ENCODE measurements at regions of chr1 and their contacts with region 1.

Region 1: GRCh38 chr1:32291708-32292492 is at the start of gene HDAC1:
- DNase-seq: peak; percentile 99
- H3K4me3 ChIP-seq: peak within 1 kb of the TSS; percentile 91
- H3K27ac ChIP-seq: peak within 1 kb of the TSS; percentile 78
- H3K4me1 ChIP-seq: peaks cover 58% of the 10 kb centered on the region
- CTCF ChIP-seq: no peak
- total RNA-seq, gene HDAC1: 259 and 270 TPM in 2 replicates

Region 2: GRCh38 chr1:31789259-31790065 is 502.4 kb before region 1 on chr1:
- CTCF ChIA-PET with region 1: no interaction called
- POLR2A ChIA-PET with region 1: no interaction called
- intact Hi-C with region 1: no loop called
- DNase-seq: peak; percentile 91
- H3K4me3 ChIP-seq: peak overlapping the region; percentile 77
- H3K27ac ChIP-seq: peak overlapping the region; percentile 82
- H3K4me1 ChIP-seq: peaks cover 44% of the 10 kb centered on the region
- CTCF ChIP-seq: peak; percentile 90

Region 3: GRCh38 chr1:32215629-32216480 is 76.0 kb before region 1 on chr1:
- CTCF ChIA-PET with region 1: interaction called, 9 read pairs
- POLR2A ChIA-PET with region 1: interaction called, 7 read pairs
- intact Hi-C with region 1: loop called (anchors 1 kb)
- DNase-seq: peak; percentile 81
- H3K4me3 ChIP-seq: no peak overlapping the region
- H3K27ac ChIP-seq: no peak overlapping the region
- H3K4me1 ChIP-seq: peaks cover 11% of the 10 kb centered on the region
- CTCF ChIP-seq: peak; percentile 95

Region 4: DNA sequence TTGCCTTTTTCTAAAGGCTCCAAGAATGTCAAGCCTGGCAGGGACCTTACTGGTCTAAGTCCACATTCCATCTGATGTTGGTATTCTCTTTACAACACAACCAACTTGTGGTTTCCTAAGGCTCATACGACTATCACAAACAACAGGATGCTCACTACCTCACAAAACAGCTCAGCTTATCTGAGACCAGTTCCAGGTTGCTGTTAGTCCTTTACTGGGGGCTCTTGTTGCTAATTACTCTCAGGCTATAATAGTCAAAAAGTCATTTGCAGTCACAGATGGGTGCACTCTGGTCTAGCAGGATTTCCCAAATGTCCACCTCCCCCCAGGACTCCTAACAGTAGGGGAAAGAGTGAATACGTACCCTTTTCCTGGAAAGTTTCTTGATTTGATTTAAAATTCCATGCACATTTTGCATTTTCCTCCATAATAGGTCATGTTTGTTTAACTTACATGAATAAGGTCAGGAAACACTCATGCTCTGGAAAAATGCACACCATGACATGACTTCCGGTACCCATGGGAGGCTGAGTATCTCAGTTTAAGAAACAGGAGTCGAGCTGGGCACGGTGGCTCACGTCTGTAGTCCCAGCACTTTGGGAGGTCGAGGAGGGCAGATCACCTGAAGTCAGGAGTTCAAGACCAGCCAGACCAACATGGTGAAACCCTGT is 24.8 kb before region 1 on chr1:
- CTCF ChIA-PET with region 1: interaction called, 3 read pairs
- POLR2A ChIA-PET with region 1: interaction called, 13 read pairs
- intact Hi-C with region 1: no loop called
- DNase-seq: peak; percentile 60
- H3K4me3 ChIP-seq: peak overlapping the region; percentile 25
- H3K27ac ChIP-seq: peak overlapping the region; percentile 75
- H3K4me1 ChIP-seq: peaks cover 72% of the 10 kb centered on the region
- CTCF ChIP-seq: no peak

Region 5: DNA sequence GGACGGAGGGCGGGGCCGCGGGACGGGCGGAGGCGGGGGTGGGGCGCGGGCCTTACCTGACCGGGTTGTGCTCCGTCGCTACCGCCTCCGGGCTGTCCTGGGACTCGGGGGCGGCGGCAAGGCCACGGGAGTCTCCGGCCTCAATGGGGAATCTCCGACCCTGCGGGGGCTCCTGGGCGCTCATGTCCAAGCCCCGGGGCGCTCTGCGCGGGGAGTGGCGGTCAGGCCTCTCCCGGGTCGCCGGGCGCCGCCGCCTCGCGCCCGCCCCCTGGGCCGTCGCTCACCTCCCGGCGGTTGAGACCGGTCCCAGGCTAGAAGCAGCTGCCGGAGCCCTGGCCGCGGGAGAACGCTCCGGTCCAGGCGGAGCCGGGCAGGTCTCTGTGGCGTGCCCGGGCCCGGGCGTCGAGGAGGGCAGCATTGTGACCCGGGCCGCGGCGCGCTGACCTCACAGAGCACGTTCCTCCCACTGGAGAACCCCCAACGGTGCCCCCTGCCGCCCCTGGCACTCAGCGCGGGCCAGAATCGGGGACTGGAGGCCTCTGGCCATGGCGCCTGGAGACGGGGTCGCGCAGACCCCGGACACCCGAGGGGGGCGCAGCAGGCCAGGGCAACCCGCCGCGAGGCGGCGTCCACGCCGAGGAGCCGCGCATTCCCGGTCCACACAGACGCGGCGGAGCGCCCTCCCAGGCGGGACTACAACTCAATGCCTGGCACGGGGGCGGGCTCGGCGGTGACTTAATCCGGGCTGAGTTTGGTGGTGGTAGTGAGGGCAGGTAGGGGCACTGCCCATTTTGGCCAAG is 70.0 kb after region 1 on chr1:
- CTCF ChIA-PET with region 1: no interaction called
- POLR2A ChIA-PET with region 1: no interaction called
- intact Hi-C with region 1: no loop called
- DNase-seq: no peak
- H3K4me3 ChIP-seq: no peak overlapping the region
- H3K27ac ChIP-seq: no peak overlapping the region
- H3K4me1 ChIP-seq: peaks cover 15% of the 10 kb centered on the region
- CTCF ChIP-seq: no peak

Region 6: DNA sequence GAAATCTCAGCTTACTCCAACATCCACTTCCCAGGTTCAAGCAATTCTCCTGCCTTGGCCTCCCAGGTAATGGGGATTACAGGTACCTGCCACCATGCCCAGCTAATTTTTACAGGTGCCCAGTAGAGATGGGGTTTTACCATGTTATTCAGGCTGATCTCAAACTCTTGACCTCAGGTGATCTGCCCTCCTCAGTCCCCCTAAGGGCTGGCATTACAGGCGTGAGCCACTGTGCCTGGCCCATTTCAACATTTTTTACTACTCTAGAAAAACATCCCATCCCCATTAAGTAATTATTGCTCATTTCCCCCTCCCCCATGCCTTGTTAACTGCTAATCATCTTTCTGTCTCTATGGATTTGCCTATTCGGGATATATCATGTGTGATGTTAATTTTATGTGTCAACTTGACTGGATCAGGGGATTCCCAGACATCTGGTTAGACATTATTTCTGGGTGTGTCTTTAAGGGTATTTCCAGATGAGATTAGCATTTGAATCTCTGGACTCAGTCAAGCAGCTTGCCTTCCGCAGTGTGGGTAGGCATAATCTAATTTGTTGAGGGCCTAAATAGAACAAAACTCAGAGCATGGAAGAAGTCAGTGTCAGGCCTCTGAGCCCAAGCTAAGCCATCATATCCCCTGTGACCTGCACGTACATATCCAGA is 140.0 kb after region 1 on chr1:
- CTCF ChIA-PET with region 1: no interaction called
- POLR2A ChIA-PET with region 1: no interaction called
- intact Hi-C with region 1: no loop called
- DNase-seq: peak; percentile 12
- H3K4me3 ChIP-seq: no peak overlapping the region
- H3K27ac ChIP-seq: no peak overlapping the region
- H3K4me1 ChIP-seq: peaks cover 9% of the 10 kb centered on the region
- CTCF ChIP-seq: no peak

Region 7: GRCh38 chr1:33633019-33633801 is 1341.3 kb after region 1 on chr1:
- CTCF ChIA-PET with region 1: no interaction called
- POLR2A ChIA-PET with region 1: no interaction called
- intact Hi-C with region 1: no loop called
- DNase-seq: peak; percentile 83
- H3K4me3 ChIP-seq: no peak overlapping the region
- H3K27ac ChIP-seq: no peak overlapping the region
- H3K4me1 ChIP-seq: no peaks in the 10 kb centered on the region
- CTCF ChIP-seq: peak; percentile 99

Measured in OCI-LY7 (cell line).